PC-3 (cell line): ENCODE measurements at regions of chr11 and their contacts with region 1.

Region 1: DNA sequence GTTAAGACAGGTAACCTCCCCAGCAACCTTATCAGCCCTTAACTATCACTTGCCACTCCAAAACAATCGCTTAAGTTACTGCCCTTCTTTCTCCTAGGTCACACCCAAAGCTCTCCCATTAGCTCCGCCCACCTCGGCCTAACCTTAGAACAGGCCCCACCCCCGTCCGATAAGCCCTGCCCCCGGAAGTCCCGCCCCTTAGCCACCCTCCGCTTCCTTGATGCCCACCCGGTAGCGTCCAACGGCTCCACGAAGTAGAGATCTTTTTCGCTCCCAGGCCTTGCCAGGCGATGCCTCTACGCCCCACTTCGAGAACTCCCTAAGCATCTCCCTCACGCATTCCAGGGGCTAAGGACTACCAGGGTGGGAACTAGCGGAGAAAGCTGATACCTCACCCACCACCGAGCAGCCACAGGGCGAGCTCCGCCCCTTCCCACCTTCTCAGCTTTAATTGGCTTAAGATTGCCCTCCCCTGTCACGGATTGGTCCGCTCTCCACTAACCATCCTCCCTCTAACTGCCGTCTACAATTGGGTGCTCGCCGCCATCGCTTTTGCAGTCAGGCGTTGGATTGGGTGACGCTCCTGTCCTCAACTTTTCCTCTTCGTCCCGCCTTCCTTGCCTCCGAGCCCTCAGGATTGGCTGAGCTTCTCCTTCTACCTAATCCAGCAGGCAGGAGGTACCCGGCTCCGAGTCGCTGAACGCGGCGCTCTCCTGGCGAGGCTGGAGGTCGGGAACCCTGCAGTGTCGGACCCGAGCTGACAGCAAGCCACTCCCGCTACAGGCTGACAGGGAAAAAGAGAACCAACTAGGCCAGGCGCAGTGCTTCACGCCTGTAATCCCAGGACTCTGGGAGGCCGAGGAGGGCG is at the start of gene ZBTB3:
- DNase-seq: peak; percentile 99
- ATAC-seq: peak; percentile 98
- H3K4me3 ChIP-seq: peak within 1 kb of the TSS; percentile 87
- H3K27ac ChIP-seq: peak within 1 kb of the TSS; percentile 73
- H3K4me1 ChIP-seq: peaks cover 16% of the 10 kb centered on the region
- H3K27me3 ChIP-seq: no peaks in the 10 kb centered on the region
- CTCF ChIP-seq: no peak
- total RNA-seq, gene ZBTB3: 2.2 and 3.3 TPM in 2 replicates

Region 2: GRCh38 chr11:62771144-62772021 is 17.4 kb after region 1 on chr11 and contains the start of gene TAF6L:
- CTCF ChIA-PET with region 1: interaction called, 3 read pairs
- POLR2A ChIA-PET with region 1: interaction called, 11 read pairs
- intact Hi-C with region 1: no loop called
- DNase-seq: peak; percentile 99
- ATAC-seq: peak; percentile 92
- H3K4me3 ChIP-seq: peak within 1 kb of the TSS; percentile 74
- H3K27ac ChIP-seq: peak within 1 kb of the TSS; percentile 76
- H3K4me1 ChIP-seq: peaks cover 13% of the 10 kb centered on the region
- H3K27me3 ChIP-seq: no peaks in the 10 kb centered on the region
- CTCF ChIP-seq: no peak
- total RNA-seq, gene TAF6L: 40.2 and 43.9 TPM in 2 replicates